ENCODE measurements at regions of chr3 and their contacts with region 1.

Region 1: GRCh38 chr3:157626789-157627188 is 123.6 kb upstream of the VEPH1 start:
- DNase-seq: no peak
- ATAC-seq: no peak
- H3K4me3 ChIP-seq: no peak overlapping the region
- H3K27ac ChIP-seq: no peak overlapping the region
- H3K4me1 ChIP-seq: no peaks in the 10 kb centered on the region
- H3K27me3 ChIP-seq: peaks cover 0 to 38% (median 7%) of the 10 kb centered on the region in 7 donors
- CTCF ChIP-seq: no peak

Region 2: GRCh38 chr3:157460253-157460652 is 166.5 kb before region 1 on chr3:
- intact Hi-C with region 1: no loop called
- DNase-seq: no peak
- ATAC-seq: peak in 1 of 8 donors; percentile 28
- H3K4me3 ChIP-seq: no peak overlapping the region
- H3K27ac ChIP-seq: no peak overlapping the region
- H3K4me1 ChIP-seq: no peaks in the 10 kb centered on the region
- H3K27me3 ChIP-seq: peaks cover 0 to 13% (median 0%) of the 10 kb centered on the region in 7 donors
- CTCF ChIP-seq: no peak

Region 3: DNA sequence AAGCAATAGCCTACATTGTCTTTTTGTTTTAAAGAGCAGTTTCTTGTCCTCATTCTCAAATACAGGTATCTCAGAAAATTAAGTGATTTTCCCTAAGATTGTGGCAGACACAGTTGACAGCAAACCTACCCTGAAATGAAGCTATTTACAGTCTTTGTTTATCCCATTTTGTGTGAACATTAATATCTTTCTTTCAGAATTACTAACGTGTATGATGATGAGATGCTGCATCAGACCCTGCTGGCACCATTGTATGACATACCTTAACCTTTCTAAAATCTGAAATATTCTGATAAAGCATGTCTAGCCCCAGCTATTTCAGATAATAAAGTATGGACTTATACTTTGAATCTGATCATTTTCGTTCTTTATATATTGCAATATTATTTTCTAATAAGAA is 669.0 kb after region 1 on chr3:
- intact Hi-C with region 1: loop called in 1 of 10 experiments (anchors 10 kb)
- DNase-seq: no peak
- ATAC-seq: no peak
- H3K4me3 ChIP-seq: no peak overlapping the region
- H3K27ac ChIP-seq: no peak overlapping the region
- H3K4me1 ChIP-seq: no peaks in the 10 kb centered on the region
- H3K27me3 ChIP-seq: no peaks in the 10 kb centered on the region
- CTCF ChIP-seq: no peak

Region 4: DNA sequence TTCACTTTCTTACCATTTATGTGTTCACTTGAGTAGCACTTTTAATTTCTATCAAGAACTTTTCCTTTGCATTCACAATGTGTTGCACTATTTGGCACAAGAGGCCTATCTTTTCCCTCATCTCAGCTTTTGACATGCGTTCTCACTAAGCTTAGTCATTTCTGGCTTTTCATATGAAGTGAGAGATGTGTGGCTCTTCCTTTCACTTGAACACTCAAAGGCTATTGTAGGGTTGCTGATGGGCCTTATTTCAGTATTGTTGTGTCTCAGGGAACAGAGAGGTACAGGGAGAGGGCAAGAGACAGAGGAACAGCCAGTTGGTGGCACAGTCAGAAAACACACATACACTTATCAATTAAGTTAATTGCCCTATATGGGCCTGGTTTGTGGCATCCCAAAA is 816.8 kb after region 1 on chr3:
- intact Hi-C with region 1: loop called in 2 of 10 experiments (anchors 5 kb)
- DNase-seq: no peak
- ATAC-seq: no peak
- H3K4me3 ChIP-seq: no peak overlapping the region
- H3K27ac ChIP-seq: no peak overlapping the region
- H3K4me1 ChIP-seq: no peaks in the 10 kb centered on the region
- H3K27me3 ChIP-seq: no peaks in the 10 kb centered on the region
- CTCF ChIP-seq: no peak

Measured in heart right ventricle (tissue), 16 donors.